ENCODE measurements at regions of chr1 and their contacts with region 1.

Region 1: DNA sequence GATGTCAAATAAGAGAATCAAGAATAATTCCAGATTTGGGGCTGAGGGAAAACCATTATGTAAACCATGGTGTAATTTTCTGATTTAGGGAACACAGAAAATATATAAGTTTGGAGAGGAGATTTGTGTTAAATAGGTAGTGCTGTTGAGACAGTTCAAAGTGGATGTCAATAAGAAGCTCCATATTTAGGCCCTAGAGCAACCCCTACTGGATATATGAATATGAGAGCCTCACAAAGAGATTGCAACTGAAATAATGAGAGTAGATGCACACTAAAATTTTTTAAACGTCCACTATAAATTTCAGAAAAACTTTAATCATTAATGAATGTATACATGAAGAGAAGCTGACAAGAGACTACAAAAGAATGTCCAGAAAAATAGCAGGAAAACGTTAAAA is 1447.8 kb upstream of the PRMT6 start:
- DNase-seq: peak; percentile 41
- ATAC-seq: peak; percentile 63
- H3K4me3 ChIP-seq: no peak overlapping the region
- H3K27ac ChIP-seq: no peak overlapping the region
- H3K4me1 ChIP-seq: no peaks in the 10 kb centered on the region
- H3K27me3 ChIP-seq: no peaks in the 10 kb centered on the region
- CTCF ChIP-seq: peak; percentile 62

Region 2: GRCh38 chr1:104648269-104648691 is 960.4 kb before region 1 on chr1:
- CTCF ChIA-PET with region 1: no interaction called
- POLR2A ChIA-PET with region 1: no interaction called
- intact Hi-C with region 1: loop called (anchors 5 kb)
- DNase-seq: peak; percentile 44
- ATAC-seq: peak; percentile 31; the same call in 1 of the 2 replicates
- H3K4me3 ChIP-seq: no peak overlapping the region
- H3K27ac ChIP-seq: no peak overlapping the region
- H3K4me1 ChIP-seq: peaks cover 10% of the 10 kb centered on the region
- H3K27me3 ChIP-seq: no peaks in the 10 kb centered on the region
- CTCF ChIP-seq: peak; percentile 88

Region 3: DNA sequence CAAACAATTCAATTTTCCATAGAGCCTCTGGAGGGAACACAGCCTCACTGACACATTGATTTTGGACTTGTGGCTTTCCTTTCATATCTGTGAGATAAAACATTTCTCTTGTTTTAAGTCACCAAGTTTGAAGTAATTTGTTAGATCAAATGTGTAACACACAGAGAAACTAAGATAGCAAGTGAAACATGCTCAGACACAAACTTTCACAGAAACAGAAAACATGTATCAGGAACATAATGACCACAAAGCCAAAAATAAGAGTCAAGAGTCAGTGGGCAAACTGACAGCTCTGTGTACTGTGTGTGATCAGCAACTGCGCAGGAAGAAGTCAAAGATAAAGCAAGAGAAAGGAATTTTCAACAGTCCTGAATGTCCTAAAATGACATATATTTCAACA is 621.5 kb before region 1 on chr1:
- CTCF ChIA-PET with region 1: no interaction called
- POLR2A ChIA-PET with region 1: no interaction called
- intact Hi-C with region 1: loop called (anchors 10 kb)
- DNase-seq: no peak
- ATAC-seq: no peak
- H3K4me3 ChIP-seq: no peak overlapping the region
- H3K27ac ChIP-seq: no peak overlapping the region
- H3K4me1 ChIP-seq: no peaks in the 10 kb centered on the region
- H3K27me3 ChIP-seq: no peaks in the 10 kb centered on the region
- CTCF ChIP-seq: no peak

Region 4: GRCh38 chr1:105459759-105460158 is 149.0 kb before region 1 on chr1:
- CTCF ChIA-PET with region 1: no interaction called
- POLR2A ChIA-PET with region 1: no interaction called
- intact Hi-C with region 1: loop called (anchors 10 kb)
- DNase-seq: no peak
- ATAC-seq: no peak
- H3K4me3 ChIP-seq: no peak overlapping the region
- H3K27ac ChIP-seq: no peak overlapping the region
- H3K4me1 ChIP-seq: no peaks in the 10 kb centered on the region
- H3K27me3 ChIP-seq: no peaks in the 10 kb centered on the region
- CTCF ChIP-seq: no peak

Region 5: DNA sequence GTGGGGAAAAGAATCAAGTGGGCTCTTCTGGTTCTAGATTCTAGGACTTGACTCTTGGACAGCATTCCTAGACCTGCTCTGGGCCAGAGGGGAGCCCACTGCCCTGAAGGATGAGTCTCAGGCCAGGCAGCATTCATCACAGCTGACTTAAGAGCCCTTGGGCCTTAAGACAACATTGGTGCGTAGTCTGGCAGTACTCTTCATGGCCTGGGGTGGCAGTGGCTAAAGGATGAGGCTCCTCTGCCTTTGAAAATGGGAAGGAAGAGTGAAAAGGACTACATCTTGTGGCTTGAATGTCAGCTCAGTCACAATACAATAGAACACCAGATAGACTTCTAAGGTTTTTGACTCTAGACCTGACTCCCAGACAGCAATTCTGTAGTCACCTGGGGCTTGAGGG is 32.7 kb after region 1 on chr1:
- CTCF ChIA-PET with region 1: no interaction called
- POLR2A ChIA-PET with region 1: no interaction called
- intact Hi-C with region 1: no loop called
- DNase-seq: peak; percentile 18
- ATAC-seq: no peak; the same call in 1 of the 2 replicates
- H3K4me3 ChIP-seq: no peak overlapping the region
- H3K27ac ChIP-seq: no peak overlapping the region
- H3K4me1 ChIP-seq: no peaks in the 10 kb centered on the region
- H3K27me3 ChIP-seq: no peaks in the 10 kb centered on the region
- CTCF ChIP-seq: 0 out of 2 replicates have a peak, but pooled peaks have one; percentile 12